ENCODE measurements at regions of chr15 and their contacts with region 1.

Region 1: DNA sequence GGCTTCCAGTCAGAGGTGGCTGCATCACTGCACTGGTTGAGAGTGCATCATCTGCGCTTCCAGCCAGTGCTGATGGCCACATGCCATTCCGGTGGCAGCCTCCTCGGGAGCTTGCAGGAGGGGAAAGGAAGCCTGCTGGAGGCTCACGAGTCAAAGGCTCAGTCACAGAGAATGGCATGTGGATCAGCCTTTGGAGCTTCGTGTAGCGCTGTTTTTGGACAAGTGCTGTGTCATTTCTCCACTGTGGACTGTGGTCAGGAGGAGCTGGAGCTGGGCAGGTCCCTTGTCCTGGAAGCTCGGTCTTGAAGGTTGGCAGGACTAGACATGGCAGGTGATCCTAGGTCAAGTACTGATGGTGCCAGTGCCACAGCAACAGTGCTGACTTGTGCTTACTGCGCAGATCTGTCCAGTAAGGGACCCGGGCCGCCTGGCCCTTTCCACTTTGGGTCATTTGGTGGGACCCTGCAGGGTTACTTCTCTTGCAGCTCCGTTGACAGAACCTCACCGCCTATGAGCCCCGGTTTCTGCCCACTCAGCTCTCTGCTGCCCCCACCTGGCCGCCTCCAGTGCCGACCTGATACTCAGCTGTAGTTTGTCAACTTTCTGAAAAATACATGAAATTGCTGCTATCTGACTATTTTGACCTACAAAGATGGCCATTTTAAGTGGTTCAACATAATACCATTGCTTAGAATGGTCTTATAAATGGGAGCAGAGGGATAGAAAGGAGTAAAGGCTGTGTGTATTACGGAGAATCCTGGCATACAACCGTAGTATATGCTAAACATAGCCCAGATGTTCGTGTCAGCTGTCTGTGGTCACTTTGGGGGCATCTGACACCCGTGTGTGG is 27.6 kb upstream of the TRPM1 start:
- DNase-seq: peak; percentile 81
- CTCF ChIP-seq: peak; percentile 88

Region 2: GRCh38 chr15:29139540-29140459 is 1989.3 kb before region 1 on chr15:
- CTCF ChIA-PET with region 1: no interaction called
- POLR2A ChIA-PET with region 1: no interaction called
- DNase-seq: peak; percentile 81
- CTCF ChIP-seq: peak; percentile 96

Region 3: DNA sequence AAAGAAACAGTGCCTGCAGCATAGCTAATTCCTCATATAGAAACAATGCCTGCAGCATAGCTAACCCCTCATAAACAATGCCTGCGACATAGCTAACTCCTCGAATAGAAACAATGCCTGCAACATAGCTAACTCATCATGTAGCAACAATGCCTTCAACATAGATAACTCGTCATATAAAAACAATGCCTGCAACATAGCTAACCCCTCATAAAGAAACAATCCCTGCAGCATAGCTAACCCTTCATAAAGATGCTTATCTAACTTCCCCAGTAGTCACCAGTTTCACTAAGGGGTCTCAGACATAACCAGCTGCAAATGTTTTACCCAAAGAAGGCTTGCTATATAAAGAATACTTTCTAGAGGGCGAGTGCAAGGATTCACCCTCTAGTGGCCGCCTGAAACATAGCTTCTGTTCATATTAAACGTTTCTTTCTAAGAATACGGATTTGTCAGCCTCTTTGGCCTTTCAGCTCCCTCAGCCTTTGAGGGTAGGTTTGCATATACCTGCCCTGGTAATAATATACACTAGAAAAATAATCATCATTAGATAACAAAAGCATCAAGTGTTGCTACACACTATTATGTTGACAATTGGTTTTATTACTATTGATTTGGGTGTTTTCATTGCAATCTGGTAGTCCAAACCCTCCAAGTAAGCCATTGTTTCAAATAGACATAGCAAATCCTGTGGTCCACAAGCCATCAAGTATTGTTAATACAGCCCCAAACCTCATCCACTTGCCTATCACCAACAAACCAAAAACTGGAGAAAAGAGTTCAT is 269.9 kb before region 1 on chr15:
- CTCF ChIA-PET with region 1: interaction called, 22 read pairs
- POLR2A ChIA-PET with region 1: no interaction called
- DNase-seq: peak; percentile 22
- CTCF ChIP-seq: peak; percentile 61

Region 4: GRCh38 chr15:30929064-30929669 is 200.0 kb before region 1 on chr15:
- CTCF ChIA-PET with region 1: interaction called, 10 read pairs
- POLR2A ChIA-PET with region 1: no interaction called
- DNase-seq: no peak
- CTCF ChIP-seq: no peak

Region 5: DNA sequence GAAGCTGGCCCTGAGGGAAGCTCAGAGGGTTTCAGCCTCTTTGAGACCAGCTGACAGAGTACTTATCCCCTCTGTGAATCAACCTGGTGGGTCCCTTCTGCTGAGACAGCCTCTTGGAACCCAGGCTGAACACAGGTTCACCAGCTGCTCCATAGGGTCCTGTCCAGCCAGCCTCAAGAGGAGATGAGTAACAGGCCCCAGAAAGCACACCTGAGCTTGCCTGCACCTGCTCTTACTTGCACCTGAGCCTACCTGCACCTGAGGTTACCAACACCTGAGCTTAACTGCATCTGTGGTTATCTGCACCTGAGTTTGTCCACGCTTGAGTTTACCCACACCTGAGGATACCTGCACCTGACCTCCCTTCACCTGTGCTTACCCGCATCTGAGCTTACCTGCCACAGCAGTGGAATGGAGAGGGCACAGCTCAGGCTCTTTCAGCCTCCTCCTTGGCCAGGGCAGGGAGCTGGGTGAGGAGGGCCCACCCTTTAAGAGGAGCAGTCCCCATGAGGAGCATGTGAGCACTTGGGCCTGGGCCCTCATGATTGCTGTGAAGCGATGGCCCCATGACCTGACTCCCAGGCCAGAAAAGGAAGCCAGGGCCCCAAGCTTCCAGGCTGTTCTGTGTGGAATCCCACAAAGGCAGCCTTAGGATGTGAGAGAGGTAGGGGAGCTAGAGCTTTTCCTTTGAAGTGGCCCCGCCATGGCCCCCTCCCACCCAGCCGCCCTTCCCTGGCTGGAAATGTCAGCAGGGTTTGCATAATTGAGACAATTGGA is 27.7 kb before region 1 on chr15 and contains the start of gene TRPM1:
- CTCF ChIA-PET with region 1: interaction called, 14 read pairs
- POLR2A ChIA-PET with region 1: no interaction called
- DNase-seq: no peak
- CTCF ChIP-seq: no peak

Region 6: DNA sequence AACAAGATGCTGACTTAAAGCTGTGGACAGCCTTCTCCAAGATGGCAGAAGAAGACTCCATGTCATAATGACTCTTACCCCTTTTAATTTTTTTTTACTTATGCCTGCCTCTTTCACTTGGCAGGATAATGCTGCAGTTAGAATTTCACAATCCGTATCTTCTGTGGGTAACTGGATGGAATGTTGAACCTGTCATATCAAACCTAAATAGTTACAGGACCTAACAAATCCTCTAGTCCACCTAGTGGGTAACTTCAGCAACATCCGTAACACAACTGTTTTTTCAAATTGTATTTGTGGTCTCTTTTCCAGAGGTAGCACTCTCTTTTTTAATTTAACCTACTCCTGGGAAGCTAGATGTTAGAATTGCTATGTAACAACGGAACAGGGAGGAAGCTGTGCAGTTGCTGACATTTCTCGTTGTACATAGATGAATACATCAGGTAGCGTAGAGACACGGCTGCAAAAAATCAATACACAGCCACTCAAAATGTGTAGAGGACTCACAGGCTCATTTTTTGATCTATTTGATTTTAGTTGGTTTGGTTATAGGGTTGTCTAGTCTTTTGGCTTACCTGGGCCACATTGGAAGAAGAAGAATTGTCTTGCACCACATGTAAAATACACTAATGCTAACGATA is 16.2 kb after region 1 on chr15:
- CTCF ChIA-PET with region 1: interaction called, 36 read pairs
- POLR2A ChIA-PET with region 1: no interaction called
- DNase-seq: no peak
- CTCF ChIP-seq: no peak